Vagina (tissue), 2 donors: ENCODE measurements at regions of chr3 and their contacts with region 1.

Region 1: DNA sequence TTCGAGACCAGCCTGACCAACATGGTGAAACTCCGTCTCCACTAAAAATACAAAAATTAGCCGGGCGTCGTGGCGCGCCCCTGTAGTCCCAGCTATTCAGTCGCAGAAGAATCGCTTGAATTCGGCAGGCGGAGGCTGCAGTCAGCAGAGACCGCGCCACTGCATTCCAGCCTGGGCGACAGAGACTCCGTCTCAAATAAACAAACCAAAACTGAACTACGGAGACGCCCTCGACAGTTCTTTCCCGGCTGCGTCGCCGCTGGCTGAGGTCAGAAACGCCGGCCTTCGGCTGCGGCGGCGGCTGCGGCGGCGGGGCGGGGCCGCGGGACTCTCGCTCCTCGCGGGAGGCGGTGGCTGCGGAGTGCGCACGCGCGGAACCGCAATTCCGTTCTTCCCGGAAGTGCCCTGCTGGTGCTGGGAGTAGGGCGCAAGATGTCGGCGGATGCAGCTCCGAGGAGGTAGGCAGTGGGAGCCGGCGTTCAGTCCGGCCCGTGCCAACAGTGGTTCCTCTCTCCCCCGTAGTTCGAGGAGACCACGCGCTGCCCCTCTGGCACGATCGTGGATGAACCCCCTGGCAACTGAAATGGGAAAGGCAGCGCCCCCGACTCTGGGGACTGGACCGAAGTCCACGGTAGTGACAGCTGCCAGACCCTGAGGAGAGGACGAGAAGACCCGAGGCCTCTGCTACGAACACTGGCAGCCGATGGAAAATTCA is 49.5 kb downstream of the TMEM44 start:
- DNase-seq: no peak
- H3K4me3 ChIP-seq: peak overlapping the region; percentile 69 to 80
- H3K27ac ChIP-seq: peak overlapping the region; percentile 91
- H3K4me1 ChIP-seq: peaks cover 16% of the 10 kb centered on the region
- H3K27me3 ChIP-seq: no peaks in the 10 kb centered on the region
- CTCF ChIP-seq: no peak
- POLR2A ChIP-seq: peak in 1 of 2 donors; percentile 87

Region 2: GRCh38 chr3:194486540-194487288 is 97.0 kb before region 1 on chr3 and contains the start of gene ATP13A3:
- intact Hi-C with region 1: loop called (anchors 5 kb)
- DNase-seq: peak in 1 of 2 donors; percentile 92
- H3K4me3 ChIP-seq: peak within 1 kb of the TSS; percentile 59 to 83
- H3K27ac ChIP-seq: peak within 1 kb of the TSS; percentile 84
- H3K4me1 ChIP-seq: peaks cover 46% of the 10 kb centered on the region
- H3K27me3 ChIP-seq: no peaks in the 10 kb centered on the region
- CTCF ChIP-seq: no peak
- POLR2A ChIP-seq: peak in 1 of 2 donors; percentile 71
- total RNA-seq, gene ATP13A3: 57.7 TPM

Region 3: DNA sequence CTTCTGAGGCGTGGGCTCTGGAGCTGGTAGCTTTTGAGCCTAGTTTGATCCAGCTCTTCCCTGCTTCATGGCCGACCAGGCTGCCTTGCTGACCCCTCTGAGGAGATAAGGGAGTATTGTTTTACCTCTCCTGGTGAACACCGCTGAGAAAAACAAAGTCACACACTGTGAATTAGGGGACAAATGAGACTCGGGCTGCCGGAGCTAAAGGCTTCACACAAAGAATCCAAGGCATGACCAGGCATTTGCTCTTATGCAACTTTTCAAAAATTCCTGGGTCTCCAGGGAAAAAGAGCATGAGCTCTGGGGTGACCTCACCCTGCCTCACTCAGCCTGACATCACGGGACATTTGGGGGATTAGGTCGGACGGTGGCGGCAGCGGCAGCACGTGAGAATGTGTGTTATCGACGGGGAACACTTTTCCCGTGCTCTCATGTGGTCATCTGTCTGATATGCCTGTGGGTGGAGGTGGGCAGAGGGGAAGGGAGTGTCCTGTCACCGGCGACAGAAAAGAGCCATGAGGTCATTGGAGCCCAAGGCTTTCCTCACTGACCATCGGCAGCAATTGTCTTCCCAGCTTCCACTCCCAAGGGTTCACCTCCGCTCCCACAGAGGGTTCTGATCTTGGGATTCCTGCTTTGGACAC is 11.5 kb before region 1 on chr3:
- intact Hi-C with region 1: no loop called
- DNase-seq: no peak
- H3K4me3 ChIP-seq: no peak overlapping the region
- H3K27ac ChIP-seq: peak overlapping the region; percentile 78
- H3K4me1 ChIP-seq: peaks cover 31% of the 10 kb centered on the region
- H3K27me3 ChIP-seq: no peaks in the 10 kb centered on the region
- CTCF ChIP-seq: no peak
- POLR2A ChIP-seq: no peak

Region 4: GRCh38 chr3:195187609-195188425 is 604.1 kb after region 1 on chr3:
- intact Hi-C with region 1: no loop called
- DNase-seq: no peak
- H3K4me3 ChIP-seq: no peak overlapping the region
- H3K27ac ChIP-seq: peak overlapping the region; percentile 50
- H3K4me1 ChIP-seq: peaks cover 52% of the 10 kb centered on the region
- H3K27me3 ChIP-seq: no peaks in the 10 kb centered on the region
- CTCF ChIP-seq: no peak
- POLR2A ChIP-seq: no peak